ENCODE measurements at regions of chr11 and their contacts with region 1.

Region 1: DNA sequence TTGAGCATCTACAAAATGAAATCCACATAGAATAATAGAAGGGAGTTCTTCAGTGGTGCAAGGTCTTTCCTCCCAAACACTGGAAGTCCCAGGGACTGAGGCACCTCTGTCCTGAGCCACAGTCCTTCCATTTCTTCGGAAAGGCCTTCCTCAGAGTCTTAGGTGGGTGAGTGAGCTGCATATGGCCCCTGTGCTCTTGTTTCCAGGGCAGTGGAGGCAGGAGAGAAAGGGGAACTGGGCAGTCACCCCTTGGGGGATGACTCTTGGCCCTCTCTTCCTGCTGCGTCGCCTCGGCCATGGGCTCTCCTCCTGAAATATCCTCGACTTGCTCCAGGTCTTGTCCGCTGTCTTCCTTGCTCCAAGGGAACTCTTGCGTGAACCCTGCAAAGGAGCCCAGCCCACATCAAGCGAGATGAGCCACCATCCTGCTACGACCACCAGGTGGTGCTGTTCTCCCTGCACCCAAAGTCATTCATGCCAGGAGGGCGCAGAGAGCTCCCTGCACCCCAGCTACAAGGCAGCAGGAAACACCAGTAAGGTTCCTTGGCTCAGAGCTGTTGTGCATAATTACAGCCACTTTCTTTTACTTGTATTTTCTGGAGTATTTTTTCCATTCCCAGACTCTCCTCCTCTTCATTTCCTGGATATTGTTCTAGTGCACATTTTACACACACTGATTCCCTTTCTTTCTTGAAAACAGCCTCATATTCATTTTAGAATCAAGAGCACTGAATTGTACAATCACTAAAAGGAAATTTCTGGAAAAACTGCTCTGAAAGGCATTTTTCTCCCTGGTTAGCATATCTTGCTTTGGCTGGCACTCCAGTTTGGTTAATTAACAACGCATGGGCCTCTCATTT is 397.8 kb downstream of the OPCML start:
- DNase-seq: peak; percentile 16
- ATAC-seq: peak; percentile 99
- H3K4me3 ChIP-seq: no peak overlapping the region
- H3K27ac ChIP-seq: no peak overlapping the region
- H3K4me1 ChIP-seq: no peaks in the 10 kb centered on the region
- H3K27me3 ChIP-seq: no peaks in the 10 kb centered on the region; a peak in 2 of 4 replicates
- CTCF ChIP-seq: peak; percentile 84 to 92 (median 90)
- EP300 ChIP-seq: no peak
- POLR2A ChIP-seq: no peak
- RAD21 ChIP-seq: peak; percentile 94

Region 2: GRCh38 chr11:132848336-132848735 is 286.2 kb before region 1 on chr11:
- CTCF ChIA-PET with region 1: no interaction called
- POLR2A ChIA-PET with region 1: no interaction called
- RAD21 ChIA-PET with region 1: no interaction called
- SMC1A ChIA-PET with region 1: no interaction called
- in situ Hi-C with region 1: no loop called
- intact Hi-C with region 1: no loop called
- DNase-seq: no peak
- ATAC-seq: no peak
- H3K4me3 ChIP-seq: no peak overlapping the region
- H3K27ac ChIP-seq: no peak overlapping the region
- H3K4me1 ChIP-seq: no peaks in the 10 kb centered on the region
- H3K27me3 ChIP-seq: no peaks in the 10 kb centered on the region
- CTCF ChIP-seq: no peak
- EP300 ChIP-seq: no peak
- POLR2A ChIP-seq: no peak
- RAD21 ChIP-seq: no peak

Region 3: GRCh38 chr11:133058501-133058900 is 76.0 kb before region 1 on chr11:
- CTCF ChIA-PET with region 1: no interaction called
- POLR2A ChIA-PET with region 1: no interaction called
- RAD21 ChIA-PET with region 1: no interaction called
- SMC1A ChIA-PET with region 1: no interaction called
- in situ Hi-C with region 1: no loop called
- intact Hi-C with region 1: no loop called
- DNase-seq: no peak
- ATAC-seq: 0 out of 3 replicates have a peak, but pooled peaks have one; percentile 19
- H3K4me3 ChIP-seq: no peak overlapping the region
- H3K27ac ChIP-seq: no peak overlapping the region
- H3K4me1 ChIP-seq: no peaks in the 10 kb centered on the region
- H3K27me3 ChIP-seq: no peaks in the 10 kb centered on the region; a peak in 3 of 4 replicates
- CTCF ChIP-seq: no peak
- EP300 ChIP-seq: no peak
- POLR2A ChIP-seq: no peak
- RAD21 ChIP-seq: no peak

Region 4: GRCh38 chr11:133118563-133119268 is 15.8 kb before region 1 on chr11:
- CTCF ChIA-PET with region 1: interaction called, 11 read pairs
- POLR2A ChIA-PET with region 1: no interaction called
- RAD21 ChIA-PET with region 1: no interaction called
- SMC1A ChIA-PET with region 1: interaction called, 3 read pairs
- in situ Hi-C with region 1: no loop called
- intact Hi-C with region 1: no loop called
- DNase-seq: no peak
- ATAC-seq: no peak
- H3K4me3 ChIP-seq: no peak overlapping the region
- H3K27ac ChIP-seq: no peak overlapping the region
- H3K4me1 ChIP-seq: no peaks in the 10 kb centered on the region
- H3K27me3 ChIP-seq: peaks cover 0 to 3% of the 10 kb centered on the region in 2 experiments; a peak in 2 of 4 replicates
- CTCF ChIP-seq: no peak
- EP300 ChIP-seq: no peak
- POLR2A ChIP-seq: no peak
- RAD21 ChIP-seq: no peak

Region 5: GRCh38 chr11:133156986-133157745 is 22.6 kb after region 1 on chr11:
- CTCF ChIA-PET with region 1: interaction called, 11 read pairs
- POLR2A ChIA-PET with region 1: no interaction called
- RAD21 ChIA-PET with region 1: interaction called, 5 read pairs
- SMC1A ChIA-PET with region 1: interaction called, 4 read pairs
- in situ Hi-C with region 1: no loop called
- intact Hi-C with region 1: no loop called
- DNase-seq: no peak
- ATAC-seq: no peak
- H3K4me3 ChIP-seq: no peak overlapping the region
- H3K27ac ChIP-seq: no peak overlapping the region
- H3K4me1 ChIP-seq: no peaks in the 10 kb centered on the region
- H3K27me3 ChIP-seq: peaks cover 2 to 6% of the 10 kb centered on the region in 2 experiments; a peak in 3 of 4 replicates
- CTCF ChIP-seq: no peak
- EP300 ChIP-seq: no peak
- POLR2A ChIP-seq: no peak
- RAD21 ChIP-seq: 0 out of 2 replicates have a peak, but pooled peaks have one; percentile 14

Region 6: DNA sequence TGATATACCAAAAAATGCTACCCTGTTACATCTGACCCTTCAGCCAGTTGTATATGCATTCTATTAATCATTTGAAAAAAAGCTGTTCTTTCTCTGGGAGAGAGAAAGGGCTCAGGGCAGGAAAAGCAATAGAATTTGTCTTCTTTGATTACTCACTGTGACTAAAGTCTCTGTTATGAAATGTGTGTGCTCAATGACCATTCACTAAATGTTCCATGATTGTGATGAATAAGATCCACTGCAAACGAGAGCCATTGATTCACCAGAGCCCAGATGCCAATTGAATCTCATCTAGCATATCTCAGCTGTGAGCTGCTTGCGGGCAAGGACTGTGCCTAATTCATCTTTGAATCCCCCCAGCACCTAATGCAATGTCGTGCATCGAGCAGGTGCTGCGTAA is 213.4 kb after region 1 on chr11:
- CTCF ChIA-PET with region 1: no interaction called
- POLR2A ChIA-PET with region 1: no interaction called
- RAD21 ChIA-PET with region 1: no interaction called
- SMC1A ChIA-PET with region 1: no interaction called
- in situ Hi-C with region 1: no loop called
- intact Hi-C with region 1: no loop called
- DNase-seq: no peak
- ATAC-seq: no peak
- H3K4me3 ChIP-seq: no peak overlapping the region
- H3K27ac ChIP-seq: no peak overlapping the region
- H3K4me1 ChIP-seq: no peaks in the 10 kb centered on the region
- H3K27me3 ChIP-seq: no peaks in the 10 kb centered on the region
- CTCF ChIP-seq: no peak
- EP300 ChIP-seq: no peak
- POLR2A ChIP-seq: no peak
- RAD21 ChIP-seq: no peak

Region 7: GRCh38 chr11:133403900-133404299 is 269.4 kb after region 1 on chr11:
- CTCF ChIA-PET with region 1: interaction called, 6 read pairs
- POLR2A ChIA-PET with region 1: no interaction called
- RAD21 ChIA-PET with region 1: interaction called, 3 read pairs
- SMC1A ChIA-PET with region 1: interaction called, 3 read pairs
- in situ Hi-C with region 1: no loop called
- intact Hi-C with region 1: loop called (anchors 5 kb)
- DNase-seq: no peak
- ATAC-seq: peak; percentile 80
- H3K4me3 ChIP-seq: no peak overlapping the region
- H3K27ac ChIP-seq: no peak overlapping the region
- H3K4me1 ChIP-seq: peaks cover 1% of the 10 kb centered on the region
- H3K27me3 ChIP-seq: no peaks in the 10 kb centered on the region
- CTCF ChIP-seq: peak; percentile 30 to 42 (median 35); a peak in 4 of 6 replicates
- EP300 ChIP-seq: no peak
- POLR2A ChIP-seq: no peak
- RAD21 ChIP-seq: peak; percentile 31; the same call in 1 of the 2 replicates

Region 8: DNA sequence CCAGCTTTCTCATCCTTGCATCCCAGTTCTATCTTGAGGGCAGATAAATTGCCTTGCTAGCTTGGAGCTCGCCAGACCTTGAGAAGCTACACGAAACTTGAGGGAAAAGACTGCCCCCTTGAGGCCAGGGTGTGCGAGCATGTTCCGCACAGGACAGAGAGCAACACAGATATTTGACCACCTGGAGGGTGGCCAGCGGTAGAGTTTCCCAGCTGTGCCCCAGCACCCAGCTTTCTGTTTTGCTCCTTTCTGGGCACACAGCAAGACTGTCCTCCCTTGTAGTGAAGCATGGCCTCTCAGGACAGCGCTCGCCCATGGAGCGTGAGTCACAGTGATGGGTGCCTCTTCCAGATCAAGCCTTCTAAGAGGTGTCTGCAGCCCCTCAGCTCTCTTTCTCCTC is 687.2 kb after region 1 on chr11:
- CTCF ChIA-PET with region 1: interaction called, 22 read pairs
- POLR2A ChIA-PET with region 1: no interaction called
- RAD21 ChIA-PET with region 1: interaction called, 11 read pairs
- SMC1A ChIA-PET with region 1: interaction called, 15 read pairs
- in situ Hi-C with region 1: loop called (anchors 5 kb)
- intact Hi-C with region 1: loop called (anchors 1 kb)
- DNase-seq: no peak
- ATAC-seq: peak; percentile 83
- H3K4me3 ChIP-seq: no peak overlapping the region
- H3K27ac ChIP-seq: no peak overlapping the region
- H3K4me1 ChIP-seq: no peaks in the 10 kb centered on the region
- H3K27me3 ChIP-seq: no peaks in the 10 kb centered on the region; a peak in 1 of 4 replicates
- CTCF ChIP-seq: peak; percentile 61 to 72 (median 71)
- EP300 ChIP-seq: no peak
- POLR2A ChIP-seq: no peak
- RAD21 ChIP-seq: peak; percentile 61

Region 9: DNA sequence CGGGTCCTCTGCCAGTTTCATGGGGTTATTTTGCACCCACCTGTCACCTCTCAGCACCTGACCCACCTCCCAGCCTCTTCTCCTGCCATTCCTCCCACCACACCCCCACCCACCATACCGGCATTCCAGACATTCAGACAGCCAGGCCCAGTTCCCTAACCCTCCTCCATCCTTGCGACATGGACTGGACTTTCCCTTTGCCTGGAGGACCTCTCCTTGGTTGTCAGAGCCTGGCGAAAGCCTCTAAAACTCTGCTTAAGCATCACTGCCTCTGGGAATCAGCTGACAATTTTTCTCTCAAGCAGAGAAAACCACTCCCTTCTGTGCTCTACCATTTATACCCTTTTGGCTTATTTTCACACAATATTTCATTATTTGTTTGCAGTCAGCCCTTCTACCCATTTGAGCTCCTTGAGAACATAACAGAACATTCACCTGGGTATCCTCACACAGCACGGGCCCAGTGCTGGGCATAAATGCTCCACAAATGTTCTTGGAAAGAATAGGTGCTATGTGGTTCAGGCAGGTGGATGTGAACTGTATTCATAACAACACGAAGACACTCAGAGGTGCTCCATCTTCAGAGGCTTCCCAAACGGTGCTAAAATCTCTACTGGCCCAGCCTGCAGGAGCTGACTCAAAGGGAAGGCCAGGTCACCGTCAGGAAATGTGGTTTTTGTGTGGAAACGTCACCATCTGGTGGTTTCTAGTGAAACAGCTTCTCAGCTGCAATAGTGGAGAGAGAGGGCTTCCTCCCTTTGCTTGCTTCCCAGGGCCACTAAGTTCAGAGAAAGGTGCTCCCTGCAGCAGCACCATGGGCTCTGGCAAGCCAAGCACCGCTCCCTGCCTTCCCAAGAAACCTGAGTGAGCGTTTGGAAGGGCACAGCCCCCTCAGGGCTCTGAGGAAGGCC is 700.4 kb after region 1 on chr11:
- CTCF ChIA-PET with region 1: interaction called, 67 read pairs
- POLR2A ChIA-PET with region 1: interaction called, 4 read pairs
- RAD21 ChIA-PET with region 1: interaction called, 19 read pairs
- SMC1A ChIA-PET with region 1: interaction called, 9 read pairs
- in situ Hi-C with region 1: no loop called
- intact Hi-C with region 1: loop called (anchors 1 kb)
- DNase-seq: peak; percentile 23
- ATAC-seq: peak; percentile 96
- H3K4me3 ChIP-seq: no peak overlapping the region
- H3K27ac ChIP-seq: no peak overlapping the region
- H3K4me1 ChIP-seq: no peaks in the 10 kb centered on the region
- H3K27me3 ChIP-seq: no peaks in the 10 kb centered on the region; a peak in 1 of 4 replicates
- CTCF ChIP-seq: peak; percentile 59 to 75 (median 61); a peak in 5 of 6 replicates
- EP300 ChIP-seq: no peak
- POLR2A ChIP-seq: no peak
- RAD21 ChIP-seq: peak; percentile 86

Measured in GM12878 (cell line).